ENCODE measurements at regions of chr14 and their contacts with region 1.

Region 1: DNA sequence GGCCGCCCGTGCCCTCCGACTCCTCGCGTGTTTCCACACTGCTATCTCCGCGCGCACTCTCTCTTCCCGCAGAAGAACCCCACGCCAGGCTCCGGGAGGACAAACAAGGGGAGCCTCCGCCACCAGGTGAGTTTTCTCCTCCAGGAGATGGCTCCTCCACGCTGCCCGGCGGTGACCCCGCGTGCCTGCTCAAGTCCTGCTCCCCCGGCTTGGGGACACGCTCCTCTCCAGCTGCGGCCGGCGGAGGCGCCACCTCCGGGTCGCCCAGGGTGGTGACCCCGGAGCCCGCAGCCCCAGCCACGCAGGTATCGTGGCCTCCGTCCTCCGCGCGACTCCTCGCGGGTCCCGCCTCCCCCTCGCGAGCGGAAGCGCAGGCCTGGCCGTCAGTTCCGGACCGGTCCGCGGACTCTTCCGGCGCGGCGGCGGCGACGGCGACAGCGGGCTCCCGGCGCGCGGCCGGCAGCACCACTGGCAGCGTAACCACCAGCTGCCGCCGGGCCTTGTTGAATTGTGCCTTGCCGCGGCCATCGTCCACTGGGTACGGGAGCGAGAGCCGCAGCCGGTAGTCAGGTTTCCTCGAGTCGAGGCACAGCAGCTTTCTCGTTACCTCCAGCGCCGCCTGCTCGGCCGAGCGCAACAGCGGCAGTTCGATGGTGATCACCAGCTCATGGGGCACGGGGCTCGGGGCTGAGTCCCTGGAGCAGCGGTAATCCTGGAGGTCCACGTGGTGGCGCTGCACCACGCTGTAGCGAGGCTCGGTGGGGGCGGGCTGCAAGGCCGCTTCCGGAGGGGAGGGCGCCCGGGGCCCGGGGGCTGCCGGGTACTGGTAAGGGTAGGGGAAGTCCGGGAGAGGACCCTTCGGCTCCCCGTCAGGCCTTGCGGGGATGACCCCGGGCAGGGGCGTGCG is 1.2 kb downstream of the DNAAF2 start:
- DNase-seq: peak; percentile 97
- H3K4me3 Mint-ChIP-seq: peak overlapping the region; percentile 91
- H3K27ac Mint-ChIP-seq: peak overlapping the region; percentile 95
- H3K4me1 Mint-ChIP-seq: peaks cover 42% of the 10 kb centered on the region
- H3K27me3 Mint-ChIP-seq: no peaks in the 10 kb centered on the region

Region 2: DNA sequence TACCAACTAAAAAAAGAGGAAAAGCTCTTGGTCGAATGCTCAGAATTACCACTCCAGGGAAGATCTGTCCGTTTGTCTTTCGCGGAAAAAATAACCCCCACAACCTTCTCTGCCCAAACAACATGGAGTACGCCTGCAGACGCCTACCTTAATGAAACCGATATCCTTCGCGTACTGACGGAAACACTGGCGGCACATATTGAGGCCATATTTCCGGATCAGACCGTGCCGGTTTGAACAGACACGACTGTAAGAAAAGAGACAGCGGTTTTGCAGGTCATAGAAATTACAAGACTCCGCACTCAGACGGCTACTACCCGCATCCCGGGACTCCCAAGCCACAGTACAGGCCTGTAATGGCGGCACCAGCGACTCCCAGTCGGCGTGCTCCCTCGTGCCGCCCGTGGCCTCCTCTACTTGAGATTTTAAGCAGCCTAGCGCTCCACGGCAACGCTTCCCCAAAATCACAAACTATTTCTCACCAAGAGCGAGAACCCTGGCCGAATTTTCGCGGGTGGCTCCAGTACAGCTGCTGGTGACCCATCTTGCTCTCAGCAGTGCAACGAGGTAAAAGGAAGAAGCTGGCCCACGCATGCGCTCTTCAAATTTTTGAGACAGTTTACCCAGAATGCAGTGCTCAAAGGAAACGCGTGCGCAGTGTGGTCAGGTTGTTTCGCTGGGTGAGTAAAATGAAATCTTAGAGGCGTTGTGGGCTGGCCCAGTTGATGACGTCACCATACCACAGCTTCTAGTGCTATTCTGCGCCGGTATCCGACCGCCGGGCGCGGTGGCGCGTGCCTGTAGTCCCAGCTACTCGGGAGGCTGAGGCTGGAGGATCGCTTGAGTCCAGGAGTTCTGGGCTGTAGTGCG is 47.9 kb before region 1 on chr14 and contains the start of gene RPS29:
- CTCF ChIA-PET with region 1: interaction called, 15 read pairs
- POLR2A ChIA-PET with region 1: interaction called, 16 read pairs
- intact Hi-C with region 1: loop called (anchors 1 kb)
- DNase-seq: peak; percentile 99
- H3K4me3 Mint-ChIP-seq: peak within 1 kb of the TSS; percentile 87
- H3K27ac Mint-ChIP-seq: peak within 1 kb of the TSS; percentile 93
- H3K4me1 Mint-ChIP-seq: peaks cover 46% of the 10 kb centered on the region
- H3K27me3 Mint-ChIP-seq: peaks cover 4% of the 10 kb centered on the region
- total RNA-seq, gene RPS29: 2,029 to 2,157 TPM

Region 3: DNA sequence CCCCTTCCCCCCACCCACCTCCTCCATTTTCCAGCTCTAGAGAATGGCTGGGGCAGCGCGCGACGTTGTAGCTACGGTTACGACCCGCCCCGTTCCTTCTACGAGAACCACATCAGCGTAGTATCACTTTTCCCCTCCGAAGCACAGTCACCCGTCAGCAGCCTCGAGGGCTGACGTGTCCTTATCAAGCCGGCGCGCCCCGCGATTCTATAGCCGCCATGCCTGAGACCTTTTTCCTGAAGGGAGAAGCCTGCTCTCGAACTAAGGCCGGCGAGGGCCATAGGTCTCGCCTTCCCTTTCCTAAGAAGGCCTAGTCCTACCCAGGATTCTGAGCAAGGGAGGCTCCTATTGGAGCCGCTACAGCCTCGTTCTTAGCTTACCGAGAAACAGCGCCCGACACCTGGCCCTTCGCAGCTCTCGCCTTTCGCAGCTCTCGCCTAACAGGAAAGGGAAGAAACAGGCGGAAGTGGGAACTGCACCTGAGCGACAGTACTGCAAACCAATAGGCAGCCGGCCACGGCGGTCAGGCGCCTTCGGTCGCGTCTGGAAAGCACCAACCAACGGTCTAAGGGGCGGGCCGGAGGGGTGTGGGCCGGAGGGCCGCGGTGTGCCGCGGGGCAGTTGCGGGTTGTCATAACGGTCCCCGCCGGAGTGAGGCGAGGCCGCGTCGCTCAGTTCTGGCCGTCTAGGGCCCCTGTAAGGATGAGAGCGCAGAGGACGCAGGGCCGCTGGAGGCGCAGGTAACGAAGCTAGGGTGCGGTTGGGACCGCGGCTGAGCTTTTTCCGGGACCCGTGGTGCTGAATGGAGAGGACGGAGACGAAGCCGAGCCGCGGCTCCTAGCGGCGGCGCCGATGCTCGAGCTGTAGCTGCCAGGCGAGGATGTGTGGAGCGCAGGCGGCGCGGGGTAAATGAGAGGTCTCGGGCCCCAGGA is 13.4 kb before region 1 on chr14 and contains the starts of genes MGAT2 and RPL36AL:
- CTCF ChIA-PET with region 1: interaction called, 100 read pairs
- POLR2A ChIA-PET with region 1: interaction called, 102 read pairs
- intact Hi-C with region 1: loop called (anchors 1 kb)
- DNase-seq: peak; percentile 98
- H3K4me3 Mint-ChIP-seq: peak within 1 kb of the TSS; percentile 96
- H3K27ac Mint-ChIP-seq: peak within 1 kb of the TSS; percentile 96
- H3K4me1 Mint-ChIP-seq: peaks cover 39% of the 10 kb centered on the region
- H3K27me3 Mint-ChIP-seq: no peaks in the 10 kb centered on the region
- total RNA-seq, gene MGAT2: 40.4 to 43.7 TPM
- total RNA-seq, gene RPL36AL: 314 to 320 TPM

Region 4: DNA sequence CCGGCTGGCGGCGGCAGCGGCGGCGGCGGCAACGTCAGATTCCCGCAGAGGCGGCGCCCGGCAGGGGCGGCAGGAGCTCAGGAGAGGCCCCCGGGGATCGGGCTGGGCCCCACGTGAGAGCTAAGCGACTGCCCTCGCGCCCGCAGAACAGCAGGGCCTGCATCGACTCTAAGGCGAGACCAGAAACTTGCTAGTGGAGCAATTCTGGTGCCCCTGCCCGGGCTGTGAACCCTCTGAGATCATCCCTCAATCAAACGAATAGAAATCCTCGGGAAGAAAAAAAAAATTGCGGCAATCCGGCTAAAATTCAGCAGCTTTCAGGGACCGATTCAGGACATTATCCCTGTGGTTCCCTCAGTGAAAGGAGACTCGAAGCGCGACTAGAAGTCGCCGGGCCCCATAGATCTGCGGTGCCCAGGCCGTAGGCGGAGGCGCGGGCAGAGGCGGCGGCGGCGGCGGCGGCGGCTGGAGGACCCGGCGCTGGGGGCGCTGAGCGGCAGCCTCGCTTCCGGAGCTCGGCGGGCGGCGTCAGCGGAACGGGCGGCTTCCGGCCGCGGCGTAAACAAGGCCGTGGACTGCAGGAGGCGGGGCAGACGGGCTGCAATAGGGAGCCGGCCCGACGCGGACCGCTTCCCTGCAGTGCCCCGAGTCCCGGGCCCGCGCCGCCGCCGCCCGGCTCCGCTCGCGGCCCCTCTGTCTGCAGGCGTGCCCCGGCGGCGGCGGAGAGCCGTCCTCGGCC is 133.8 kb after region 1 on chr14 and contains the start of gene KLHDC2:
- CTCF ChIA-PET with region 1: interaction called, 63 read pairs
- POLR2A ChIA-PET with region 1: interaction called, 40 read pairs
- intact Hi-C with region 1: loop called (anchors 1 kb)
- DNase-seq: peak; percentile 94
- H3K4me3 Mint-ChIP-seq: peak within 1 kb of the TSS; percentile 88
- H3K27ac Mint-ChIP-seq: peak within 1 kb of the TSS; percentile 100
- H3K4me1 Mint-ChIP-seq: peaks cover 28% of the 10 kb centered on the region
- H3K27me3 Mint-ChIP-seq: no peaks in the 10 kb centered on the region
- total RNA-seq, gene KLHDC2: 27.8 to 28.2 TPM

Region 5: DNA sequence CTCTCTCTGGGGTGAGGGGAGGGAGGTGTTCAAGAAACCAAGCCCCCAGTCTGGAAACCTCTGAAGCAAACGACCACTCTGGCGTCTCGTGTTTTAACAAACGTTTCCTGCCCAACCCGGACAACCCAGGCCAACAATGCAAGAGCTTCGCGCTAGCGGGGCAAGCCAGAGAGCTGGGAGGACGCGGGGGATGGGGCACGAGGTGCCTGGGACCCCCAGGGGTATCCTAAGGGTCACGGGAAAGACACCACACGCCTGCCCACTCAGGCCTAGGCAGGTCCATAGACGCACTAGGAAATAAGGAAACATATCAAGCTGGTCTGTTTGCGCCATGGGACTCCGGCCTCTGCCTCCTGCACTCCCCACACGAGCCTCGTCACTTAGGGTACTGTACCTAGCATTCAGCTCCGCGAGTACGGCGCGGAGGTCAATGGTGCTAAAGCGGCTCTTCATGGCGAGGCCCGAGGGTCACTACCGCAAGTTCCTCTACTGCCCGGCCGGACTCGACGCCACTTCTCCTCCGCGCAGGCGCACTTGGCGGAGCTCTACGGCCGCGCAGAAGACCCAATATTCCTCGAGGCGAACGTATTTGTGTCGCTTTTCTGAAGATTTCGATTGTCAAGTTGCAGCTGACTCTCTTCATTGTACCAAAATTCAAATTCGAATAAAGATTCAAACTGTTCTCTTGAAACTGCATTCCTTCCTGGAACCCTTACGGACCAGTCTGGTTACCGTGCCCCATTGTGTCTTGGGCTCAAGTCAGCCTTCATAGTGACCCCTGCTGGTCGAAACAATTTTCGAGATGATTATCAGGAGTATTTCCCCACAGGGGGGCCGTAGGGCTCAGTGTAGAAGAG is 218.6 kb after region 1 on chr14 and contains the start of gene NEMF:
- CTCF ChIA-PET with region 1: interaction called, 27 read pairs
- POLR2A ChIA-PET with region 1: interaction called, 15 read pairs
- intact Hi-C with region 1: loop called (anchors 1 kb)
- DNase-seq: peak; percentile 88
- H3K4me3 Mint-ChIP-seq: peak within 1 kb of the TSS; percentile 98
- H3K27ac Mint-ChIP-seq: peak within 1 kb of the TSS; percentile 95
- H3K4me1 Mint-ChIP-seq: peaks cover 39% of the 10 kb centered on the region
- H3K27me3 Mint-ChIP-seq: no peaks in the 10 kb centered on the region
- total RNA-seq, gene NEMF: 63.6 to 71.0 TPM

Region 6: GRCh38 chr14:50023671-50024490 is 390.0 kb after region 1 on chr14:
- CTCF ChIA-PET with region 1: no interaction called
- POLR2A ChIA-PET with region 1: no interaction called
- intact Hi-C with region 1: no loop called
- DNase-seq: no peak
- H3K4me3 Mint-ChIP-seq: no peak overlapping the region
- H3K27ac Mint-ChIP-seq: peak overlapping the region; percentile 31
- H3K4me1 Mint-ChIP-seq: peaks cover 43% of the 10 kb centered on the region
- H3K27me3 Mint-ChIP-seq: no peaks in the 10 kb centered on the region

Region 7: DNA sequence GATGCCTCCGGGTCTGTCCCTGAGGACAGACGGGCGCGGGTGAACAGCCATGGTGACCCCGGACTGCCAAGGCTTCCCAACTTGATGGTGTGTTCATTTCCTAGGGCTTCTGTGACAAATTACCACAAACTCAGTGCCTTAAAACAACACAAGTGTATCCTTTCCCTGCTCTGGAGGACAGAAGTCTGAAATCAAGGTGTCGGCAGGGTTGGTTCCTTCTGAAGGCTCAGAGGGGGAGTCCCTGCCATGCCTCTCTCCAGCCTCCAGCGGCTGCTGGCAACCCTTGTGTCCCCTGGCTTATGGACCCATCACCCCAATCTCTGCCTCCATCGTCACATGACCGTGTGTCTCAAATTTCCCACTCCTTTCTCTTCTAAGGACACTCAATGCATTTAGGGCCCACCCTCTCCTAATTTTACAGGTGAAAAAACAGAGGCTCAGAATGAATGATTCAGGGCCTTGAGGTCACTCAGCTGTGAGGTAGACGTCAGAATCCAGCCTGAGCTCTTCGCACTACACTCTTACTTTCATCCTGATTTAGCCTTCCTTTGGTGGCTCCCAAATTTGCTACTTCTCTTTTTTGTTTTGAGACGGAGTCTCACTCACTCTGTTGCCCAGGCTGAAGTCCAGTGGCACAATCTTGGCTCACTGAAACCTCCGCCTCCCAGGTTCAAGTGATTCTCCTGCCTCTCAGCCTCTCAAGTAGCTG is 437.1 kb after region 1 on chr14:
- CTCF ChIA-PET with region 1: no interaction called
- POLR2A ChIA-PET with region 1: no interaction called
- intact Hi-C with region 1: no loop called
- DNase-seq: no peak
- H3K4me3 Mint-ChIP-seq: no peak overlapping the region
- H3K27ac Mint-ChIP-seq: no peak overlapping the region
- H3K4me1 Mint-ChIP-seq: peaks cover 53% of the 10 kb centered on the region
- H3K27me3 Mint-ChIP-seq: no peaks in the 10 kb centered on the region

Region 8: DNA sequence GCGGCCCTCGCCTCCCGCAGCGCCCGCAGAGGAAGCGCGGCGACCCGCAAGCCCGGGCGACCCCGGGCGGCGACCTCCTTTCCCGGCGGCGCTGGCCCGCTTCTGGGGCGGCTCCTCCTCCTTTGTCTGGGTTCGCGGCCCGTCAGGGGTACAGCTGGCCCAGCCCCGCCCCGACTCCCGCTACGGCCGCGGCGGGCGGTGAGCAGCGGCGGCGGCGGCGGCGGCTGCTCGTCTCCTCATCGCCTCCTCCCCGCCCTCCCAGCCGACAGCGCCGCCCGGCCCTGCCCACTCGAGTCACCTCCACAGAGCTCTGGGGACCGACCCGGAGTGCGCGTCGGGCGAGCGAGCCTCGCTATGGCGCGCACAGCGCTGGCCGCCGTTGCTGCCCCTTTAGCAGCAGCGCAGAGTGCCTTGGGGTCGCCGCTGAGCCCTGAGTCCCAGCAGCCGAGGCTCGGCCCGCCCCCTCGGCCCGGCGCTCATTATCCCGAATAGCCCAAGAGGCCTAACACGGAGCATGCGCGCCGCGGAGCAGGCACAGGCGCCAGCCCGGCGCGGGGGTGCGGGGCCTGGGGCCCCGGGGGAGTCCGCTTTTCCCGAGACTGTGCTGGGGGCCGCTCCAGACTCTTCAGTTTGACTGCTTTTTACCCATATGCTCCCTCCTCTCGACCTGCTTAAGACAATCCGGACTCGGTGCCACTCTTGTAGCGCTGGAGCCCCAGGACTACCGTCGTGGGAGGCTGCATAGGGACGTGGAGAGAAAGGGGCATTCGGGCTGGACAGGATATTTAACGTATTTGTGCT is 597.8 kb after region 1 on chr14 and contains the start of gene SOS2:
- CTCF ChIA-PET with region 1: no interaction called
- POLR2A ChIA-PET with region 1: interaction called, 4 read pairs
- intact Hi-C with region 1: loop called (anchors 2 kb)
- DNase-seq: peak; percentile 86
- H3K4me3 Mint-ChIP-seq: peak within 1 kb of the TSS; percentile 78
- H3K27ac Mint-ChIP-seq: peak within 1 kb of the TSS; percentile 85
- H3K4me1 Mint-ChIP-seq: peaks cover 40% of the 10 kb centered on the region
- H3K27me3 Mint-ChIP-seq: no peaks in the 10 kb centered on the region
- total RNA-seq, gene SOS2: 19.6 to 20.9 TPM

Region 9: GRCh38 chr14:50363714-50364111 is 729.8 kb after region 1 on chr14:
- CTCF ChIA-PET with region 1: no interaction called
- POLR2A ChIA-PET with region 1: no interaction called
- intact Hi-C with region 1: loop called (anchors 5 kb)
- DNase-seq: peak; percentile 73
- H3K4me3 Mint-ChIP-seq: peak overlapping the region; percentile 72
- H3K27ac Mint-ChIP-seq: peak overlapping the region; percentile 84
- H3K4me1 Mint-ChIP-seq: peaks cover 17% of the 10 kb centered on the region
- H3K27me3 Mint-ChIP-seq: no peaks in the 10 kb centered on the region

Measured in activated CD4-positive, alpha-beta memory T cell treated with anti-CD3 and anti-CD28 coated beads for 36 hours (primary cell).